ENCODE measurements at regions of chr5 and their contacts with region 1.

Region 1: GRCh38 chr5:151651997-151652645 is 34.6 kb downstream of the SPARC start:
- DNase-seq: no peak
- H3K4me3 ChIP-seq: no peak overlapping the region
- H3K27ac ChIP-seq: no peak overlapping the region
- H3K27me3 ChIP-seq: no peaks in the 10 kb centered on the region
- CTCF ChIP-seq: peak; percentile 95

Region 2: GRCh38 chr5:151164686-151165392 is 487.3 kb before region 1 on chr5:
- CTCF ChIA-PET with region 1: interaction called, 15 read pairs
- POLR2A ChIA-PET with region 1: no interaction called
- DNase-seq: peak; percentile 56
- H3K4me3 ChIP-seq: no peak overlapping the region
- H3K27ac ChIP-seq: no peak overlapping the region
- H3K27me3 ChIP-seq: peaks cover 2% of the 10 kb centered on the region
- CTCF ChIP-seq: peak; percentile 93

Region 3: GRCh38 chr5:151384106-151384505 is 268.0 kb before region 1 on chr5:
- CTCF ChIA-PET with region 1: interaction called, 16 read pairs
- POLR2A ChIA-PET with region 1: no interaction called
- DNase-seq: no peak
- H3K4me3 ChIP-seq: no peak overlapping the region
- H3K27ac ChIP-seq: no peak overlapping the region
- H3K27me3 ChIP-seq: peaks cover 3% of the 10 kb centered on the region
- CTCF ChIP-seq: no peak

Region 4: GRCh38 chr5:151509231-151509630 is 142.9 kb before region 1 on chr5:
- CTCF ChIA-PET with region 1: interaction called, 16 read pairs
- POLR2A ChIA-PET with region 1: no interaction called
- DNase-seq: no peak
- H3K4me3 ChIP-seq: no peak overlapping the region
- H3K27ac ChIP-seq: no peak overlapping the region
- H3K27me3 ChIP-seq: no peaks in the 10 kb centered on the region
- CTCF ChIP-seq: no peak

Region 5: GRCh38 chr5:151637676-151638075 is 14.4 kb before region 1 on chr5:
- CTCF ChIA-PET with region 1: interaction called, 42 read pairs
- POLR2A ChIA-PET with region 1: no interaction called
- DNase-seq: no peak
- H3K4me3 ChIP-seq: no peak overlapping the region
- H3K27ac ChIP-seq: no peak overlapping the region
- H3K27me3 ChIP-seq: peaks cover 20% of the 10 kb centered on the region
- CTCF ChIP-seq: no peak

Region 6: GRCh38 chr5:151751091-151751490 is 99.0 kb after region 1 on chr5:
- CTCF ChIA-PET with region 1: interaction called, 136 read pairs
- POLR2A ChIA-PET with region 1: no interaction called
- DNase-seq: no peak
- H3K4me3 ChIP-seq: no peak overlapping the region
- H3K27ac ChIP-seq: no peak overlapping the region
- H3K27me3 ChIP-seq: no peaks in the 10 kb centered on the region
- CTCF ChIP-seq: no peak

Measured in AG04450 (cell line).